Heart right ventricle (tissue), 16 donors: ENCODE measurements at regions of chr10 and their contacts with region 1.

Region 1: DNA sequence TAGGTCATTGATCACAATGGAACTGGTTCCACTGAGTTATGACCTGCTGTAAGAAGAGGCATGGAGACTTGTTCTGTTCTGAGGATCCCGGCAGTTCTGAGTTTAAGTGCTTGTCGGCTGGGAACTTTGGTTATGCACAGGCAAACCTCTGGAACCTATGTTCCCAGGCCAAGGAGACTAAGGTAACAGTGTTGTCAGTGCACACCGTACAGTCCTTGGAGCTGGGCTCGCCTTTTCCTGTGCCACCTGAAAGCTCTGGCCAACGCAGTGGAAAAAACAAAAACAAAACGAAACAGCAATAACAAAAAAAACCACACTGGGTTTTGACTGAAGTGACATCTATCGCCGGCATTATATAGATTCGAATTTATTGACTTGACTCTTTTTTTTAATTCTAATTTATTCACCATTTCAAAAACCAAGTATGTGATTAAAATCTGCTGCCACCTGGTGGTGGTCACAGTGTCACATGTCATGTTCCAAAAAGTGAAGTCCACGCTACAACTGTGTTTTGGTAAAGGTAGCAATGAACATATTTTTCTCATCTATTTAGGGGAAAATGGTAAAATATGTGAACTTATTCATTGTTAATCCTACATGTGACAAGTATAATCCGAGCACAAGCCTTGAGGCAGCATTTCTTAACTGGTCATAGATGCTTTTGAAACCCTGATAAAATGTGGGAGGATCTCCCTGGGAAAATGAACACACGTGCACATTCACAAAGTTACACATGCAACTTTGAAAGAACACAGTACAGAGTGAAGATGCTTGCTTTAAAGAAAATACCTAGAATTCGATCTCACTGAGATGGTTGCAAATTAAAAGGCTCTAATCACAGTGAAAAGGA is 113.8 kb upstream of the PPP2R2D start:
- DNase-seq: peak in 1 of 2 donors; percentile 17
- ATAC-seq: no peak
- H3K4me3 ChIP-seq: no peak overlapping the region
- H3K27ac ChIP-seq: no peak overlapping the region
- H3K4me1 ChIP-seq: no peaks in the 10 kb centered on the region
- H3K27me3 ChIP-seq: peaks cover 0 to 26% (median 14%) of the 10 kb centered on the region in 7 donors
- CTCF ChIP-seq: peak; percentile 48 to 77 (median 72)

Region 2: GRCh38 chr10:130179640-130180039 is 1607.3 kb before region 1 on chr10:
- intact Hi-C with region 1: loop called in 1 of 10 experiments (anchors 10 kb)
- DNase-seq: peak in 1 of 2 donors; percentile 26
- ATAC-seq: peak in 7 of 8 donors; percentile 28 to 75 (median 53)
- H3K4me3 ChIP-seq: no peak overlapping the region
- H3K27ac ChIP-seq: no peak overlapping the region
- H3K4me1 ChIP-seq: peaks cover 0 to 9% (median 5%) of the 10 kb centered on the region in 9 donors
- H3K27me3 ChIP-seq: no peaks in the 10 kb centered on the region
- CTCF ChIP-seq: peak in 7 of 9 donors; percentile 22 to 54 (median 40)

Region 3: DNA sequence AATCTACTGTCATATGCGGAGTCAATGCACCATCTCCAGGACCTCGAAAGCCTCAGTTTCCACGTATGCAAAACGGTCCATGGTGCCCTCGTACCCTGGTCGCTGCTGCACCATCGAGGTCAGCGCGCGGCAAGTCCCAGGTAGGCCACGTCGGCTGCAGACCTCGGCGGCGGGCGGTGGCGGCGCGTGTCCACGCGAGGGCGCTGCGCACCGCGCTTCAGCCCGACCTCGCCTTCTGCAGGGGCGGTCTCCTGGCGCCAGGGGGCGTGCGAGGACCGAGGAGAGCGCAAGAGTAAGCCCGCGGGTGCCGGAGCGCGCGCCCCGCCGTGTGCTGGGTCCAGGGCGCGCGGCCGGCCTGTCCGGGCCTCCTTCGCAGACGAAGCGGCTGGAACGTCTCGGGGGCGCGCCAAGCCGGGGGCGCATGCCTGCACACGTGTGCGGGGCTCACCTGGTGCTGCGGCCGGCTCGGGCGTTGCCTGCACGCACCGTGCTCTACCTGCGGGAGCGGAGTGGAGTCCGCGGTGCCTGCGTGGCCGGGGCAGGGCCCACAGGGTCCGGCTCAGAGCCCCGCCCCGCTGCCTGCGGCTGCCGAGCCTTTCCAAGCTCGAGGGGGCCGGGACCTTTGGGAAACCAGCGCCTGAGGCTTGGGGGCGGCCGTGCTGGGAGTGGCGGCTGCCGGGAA is 1596.8 kb before region 1 on chr10:
- intact Hi-C with region 1: loop called in 7 of 10 experiments (anchors 2 to 10 kb)
- DNase-seq: peak; percentile 85 to 90
- ATAC-seq: peak; percentile 84 to 93 (median 88)
- H3K4me3 ChIP-seq: peak overlapping the region; percentile 23 to 68 (median 64)
- H3K27ac ChIP-seq: peak overlapping the region in 2 of 10 donors; percentile 34 to 42
- H3K4me1 ChIP-seq: peaks cover 3 to 23% (median 8%) of the 10 kb centered on the region in 9 donors
- H3K27me3 ChIP-seq: peaks cover 0 to 15% (median 0%) of the 10 kb centered on the region in 7 donors
- CTCF ChIP-seq: peak; percentile 100

Region 4: DNA sequence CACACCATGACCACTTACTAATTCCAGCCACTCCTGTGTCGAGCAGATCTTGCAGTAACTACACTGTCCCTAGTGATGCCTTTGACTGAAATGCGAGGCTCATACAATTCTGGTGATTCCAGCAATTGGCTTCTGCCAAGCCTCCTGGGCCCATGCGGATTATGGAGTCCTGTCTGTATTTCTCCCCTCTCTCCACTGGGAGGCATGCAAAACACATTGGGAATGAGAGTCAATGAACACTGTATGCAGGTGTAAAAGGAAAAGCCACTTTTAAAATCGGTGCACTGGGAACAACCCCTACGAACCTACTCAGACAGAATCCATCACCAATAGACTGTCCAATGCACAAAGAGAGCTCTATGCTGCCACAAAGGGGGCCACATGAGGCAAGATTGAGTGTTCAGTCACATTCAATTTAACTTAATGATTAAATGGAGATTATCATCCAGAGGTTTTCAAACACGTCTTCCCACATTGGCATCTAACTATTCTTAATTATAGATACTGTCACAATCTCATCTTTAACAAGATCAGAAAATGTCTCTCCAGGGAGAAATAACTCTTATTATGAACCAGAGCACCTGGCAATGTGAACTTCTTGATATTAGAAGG is 1100.2 kb before region 1 on chr10:
- intact Hi-C with region 1: loop called in 3 of 10 experiments (anchors 5 to 10 kb)
- DNase-seq: no peak
- ATAC-seq: peak in 1 of 8 donors; percentile 34
- H3K4me3 ChIP-seq: no peak overlapping the region
- H3K27ac ChIP-seq: no peak overlapping the region
- H3K4me1 ChIP-seq: no peaks in the 10 kb centered on the region
- H3K27me3 ChIP-seq: peaks cover 0 to 5% (median 0%) of the 10 kb centered on the region in 7 donors
- CTCF ChIP-seq: peak in 7 of 9 donors; percentile 27 to 43 (median 35)

Region 5: DNA sequence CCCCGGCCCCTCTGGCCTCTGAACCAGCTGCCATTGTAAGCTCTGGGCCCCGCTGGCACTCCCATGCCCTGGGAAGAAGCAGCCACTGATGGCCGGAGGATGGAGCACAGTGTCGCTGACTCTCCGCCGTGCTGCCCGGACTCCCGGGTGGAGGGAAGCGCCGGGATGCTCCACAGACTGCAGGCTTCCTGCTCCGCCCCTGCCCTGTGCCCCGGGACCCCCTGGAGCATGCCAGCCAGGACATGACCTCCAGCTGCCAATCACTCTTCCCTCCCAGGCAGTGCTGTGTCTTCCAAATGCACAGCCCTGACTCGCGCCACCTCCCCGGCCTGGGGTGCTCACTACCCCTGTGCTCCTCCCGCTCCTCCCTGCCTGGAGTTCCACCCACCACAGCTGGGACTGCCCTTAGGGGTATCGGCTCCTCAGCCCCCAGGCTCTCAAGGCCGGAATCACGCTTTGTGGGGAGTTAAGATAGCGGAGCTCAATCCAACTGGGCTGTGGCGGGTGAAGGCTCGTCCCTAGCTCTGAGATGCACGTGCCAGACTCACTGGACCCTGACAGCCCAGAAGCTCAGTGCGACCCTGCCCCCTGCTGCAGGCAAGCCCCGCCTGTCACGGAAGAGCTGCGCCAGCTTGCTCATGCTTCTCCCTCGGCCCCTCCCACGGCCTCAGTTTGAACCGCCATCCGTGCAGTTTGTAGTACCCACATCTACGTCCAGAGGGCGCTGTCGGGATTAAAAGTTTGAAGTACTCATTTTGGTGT is 333.2 kb before region 1 on chr10:
- intact Hi-C with region 1: loop called in 4 of 10 experiments (anchors 5 to 10 kb)
- DNase-seq: peak; percentile 62 to 64
- ATAC-seq: peak; percentile 52 to 80 (median 68)
- H3K4me3 ChIP-seq: peak overlapping the region in 9 of 10 donors; percentile 3 to 52 (median 35)
- H3K27ac ChIP-seq: no peak overlapping the region
- H3K4me1 ChIP-seq: peaks cover 0 to 12% (median 8%) of the 10 kb centered on the region in 9 donors
- H3K27me3 ChIP-seq: peaks cover 0 to 75% (median 62%) of the 10 kb centered on the region in 7 donors
- CTCF ChIP-seq: peak; percentile 56 to 94 (median 83)

Region 6: GRCh38 chr10:131676511-131677421 is 110.2 kb before region 1 on chr10:
- intact Hi-C with region 1: no loop called
- DNase-seq: no peak
- ATAC-seq: no peak
- H3K4me3 ChIP-seq: no peak overlapping the region
- H3K27ac ChIP-seq: no peak overlapping the region
- H3K4me1 ChIP-seq: no peaks in the 10 kb centered on the region
- H3K27me3 ChIP-seq: peaks cover 0 to 40% (median 15%) of the 10 kb centered on the region in 7 donors
- CTCF ChIP-seq: no peak